Heart right ventricle (tissue), 16 donors: ENCODE measurements at regions of chr17 and their contacts with region 1.

Region 1: DNA sequence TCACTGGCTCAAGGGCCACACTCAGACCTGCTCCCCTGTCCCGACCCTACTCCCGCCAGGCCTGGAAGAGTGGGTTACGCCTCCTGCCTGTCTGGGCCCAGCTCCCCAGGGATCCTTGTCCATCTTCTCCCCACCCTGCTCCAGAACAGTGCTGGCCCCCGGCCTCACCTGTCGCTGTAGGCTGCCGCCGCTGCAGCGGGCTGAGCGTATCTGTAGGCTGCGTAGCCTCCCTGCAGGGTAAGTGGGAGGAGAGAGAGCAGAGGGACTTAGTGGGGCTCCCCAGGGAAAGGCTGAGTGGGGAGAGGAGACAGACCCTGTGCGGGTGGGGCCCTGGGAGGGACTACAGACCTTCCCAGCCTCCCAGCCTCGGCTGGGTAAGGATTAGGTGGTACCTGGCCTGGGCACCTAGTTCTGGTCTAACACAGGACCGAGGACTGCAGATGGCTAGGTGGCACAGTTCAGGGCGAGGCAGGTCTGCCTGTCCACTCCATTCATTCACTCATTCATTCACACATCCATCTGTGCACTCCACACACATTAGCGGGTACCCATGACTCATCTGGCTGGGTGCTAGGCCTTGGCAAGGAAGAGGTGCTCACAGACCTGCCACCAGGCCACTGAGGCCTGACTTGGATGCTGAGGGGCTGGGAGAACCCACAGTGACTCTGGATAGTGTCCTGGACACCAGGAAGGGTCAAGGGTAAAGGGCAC is 20.9 kb downstream of the ENGASE start:
- DNase-seq: no peak
- ATAC-seq: no peak
- H3K4me3 ChIP-seq: no peak overlapping the region
- H3K27ac ChIP-seq: no peak overlapping the region
- H3K4me1 ChIP-seq: peaks cover 0 to 7% (median under 1%) of the 10 kb centered on the region in 9 donors
- H3K27me3 ChIP-seq: peaks cover 26 to 92% (median 81%) of the 10 kb centered on the region in 7 donors
- CTCF ChIP-seq: no peak

Region 2: GRCh38 chr17:79147746-79148506 is 52.4 kb after region 1 on chr17:
- intact Hi-C with region 1: no loop called
- DNase-seq: no peak
- ATAC-seq: no peak
- H3K4me3 ChIP-seq: no peak overlapping the region
- H3K27ac ChIP-seq: no peak overlapping the region
- H3K4me1 ChIP-seq: no peaks in the 10 kb centered on the region
- H3K27me3 ChIP-seq: peaks cover 0 to 76% (median 53%) of the 10 kb centered on the region in 7 donors
- CTCF ChIP-seq: no peak

Region 3: DNA sequence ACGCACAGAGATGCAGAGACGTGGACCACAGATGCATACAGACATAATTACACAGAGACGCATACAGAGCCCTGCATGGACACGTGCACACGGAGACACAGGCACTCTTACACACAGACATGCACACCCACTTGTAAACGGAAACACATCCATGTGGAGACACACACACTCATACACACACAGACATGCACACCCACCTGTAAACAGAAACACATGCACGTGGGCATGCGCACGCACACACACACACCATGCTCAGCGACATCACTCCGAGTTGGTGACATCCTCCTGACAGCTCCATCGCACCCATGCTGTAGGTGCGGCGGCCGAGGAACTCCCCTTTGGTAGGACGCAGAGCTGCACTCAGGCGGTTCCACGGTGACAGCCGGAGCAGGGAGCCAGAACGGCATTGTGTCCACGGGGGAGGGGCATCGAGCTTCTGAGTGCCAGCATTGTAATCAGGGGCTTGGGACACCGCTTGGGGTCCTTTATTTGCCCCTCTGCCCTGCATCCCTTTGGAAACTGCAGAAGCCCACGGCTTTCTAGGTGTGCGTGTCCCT is 281.8 kb after region 1 on chr17:
- intact Hi-C with region 1: loop called in 1 of 10 experiments (anchors 5 kb)
- DNase-seq: no peak
- ATAC-seq: no peak
- H3K4me3 ChIP-seq: no peak overlapping the region
- H3K27ac ChIP-seq: no peak overlapping the region
- H3K4me1 ChIP-seq: no peaks in the 10 kb centered on the region
- H3K27me3 ChIP-seq: peaks cover 0 to 99% (median 77%) of the 10 kb centered on the region in 7 donors
- CTCF ChIP-seq: no peak